MCF 10A (cell line): ENCODE measurements at regions of chr2 and their contacts with region 1.

Region 1: GRCh38 chr2:190648289-190649034 is 421 bp upstream of the NAB1 start:
- DNase-seq: peak; percentile 89
- H3K4me3 Mint-ChIP-seq: peak overlapping the region; percentile 94
- H3K27ac Mint-ChIP-seq: peak overlapping the region; percentile 85
- H3K4me1 Mint-ChIP-seq: peaks cover 25% of the 10 kb centered on the region
- H3K27me3 Mint-ChIP-seq: no peaks in the 10 kb centered on the region
- CTCF ChIP-seq: no peak

Region 2: GRCh38 chr2:190327867-190328572 is 320.4 kb before region 1 on chr2:
- CTCF ChIA-PET with region 1: no interaction called
- POLR2A ChIA-PET with region 1: no interaction called
- intact Hi-C with region 1: no loop called
- DNase-seq: no peak
- H3K4me3 Mint-ChIP-seq: no peak overlapping the region
- H3K27ac Mint-ChIP-seq: no peak overlapping the region
- H3K4me1 Mint-ChIP-seq: no peaks in the 10 kb centered on the region
- H3K27me3 Mint-ChIP-seq: no peaks in the 10 kb centered on the region
- CTCF ChIP-seq: no peak

Region 3: DNA sequence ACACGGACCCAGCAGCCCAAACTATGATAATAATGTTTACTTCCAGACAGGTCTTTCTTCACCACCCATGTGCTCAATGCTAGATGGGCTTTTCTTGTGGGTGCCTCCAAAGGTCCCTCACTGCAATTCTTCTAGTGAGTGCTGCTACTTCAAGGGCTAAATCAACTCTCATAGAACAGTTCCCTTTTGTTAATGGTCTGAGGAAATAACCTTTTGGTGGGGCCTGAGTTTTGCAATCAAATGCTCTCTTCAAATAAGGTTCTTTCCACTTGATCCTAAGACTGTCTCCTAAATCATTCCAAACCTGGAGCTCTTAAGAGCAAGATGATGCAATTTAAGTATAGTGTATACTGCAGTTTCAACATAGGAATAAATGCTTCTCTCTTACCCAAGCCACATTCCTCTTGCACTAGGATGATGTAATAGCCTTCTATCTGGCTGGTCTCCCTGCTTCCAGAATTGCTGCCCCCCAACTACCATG is 119.9 kb before region 1 on chr2:
- CTCF ChIA-PET with region 1: interaction called, 3 read pairs
- POLR2A ChIA-PET with region 1: interaction called, 42 read pairs
- intact Hi-C with region 1: no loop called
- DNase-seq: peak; percentile 89
- H3K4me3 Mint-ChIP-seq: no peak overlapping the region
- H3K27ac Mint-ChIP-seq: peak overlapping the region; percentile 87
- H3K4me1 Mint-ChIP-seq: peaks cover 36% of the 10 kb centered on the region
- H3K27me3 Mint-ChIP-seq: no peaks in the 10 kb centered on the region
- CTCF ChIP-seq: no peak

Region 4: GRCh38 chr2:190545555-190546385 is 102.7 kb before region 1 on chr2:
- CTCF ChIA-PET with region 1: interaction called, 4 read pairs
- POLR2A ChIA-PET with region 1: interaction called, 37 read pairs
- intact Hi-C with region 1: no loop called
- DNase-seq: no peak
- H3K4me3 Mint-ChIP-seq: peak overlapping the region; percentile 63
- H3K27ac Mint-ChIP-seq: peak overlapping the region; percentile 94
- H3K4me1 Mint-ChIP-seq: peaks cover 32% of the 10 kb centered on the region
- H3K27me3 Mint-ChIP-seq: no peaks in the 10 kb centered on the region
- CTCF ChIP-seq: no peak

Region 5: GRCh38 chr2:190578158-190579057 is 70.1 kb before region 1 on chr2:
- CTCF ChIA-PET with region 1: no interaction called
- POLR2A ChIA-PET with region 1: interaction called, 47 read pairs
- intact Hi-C with region 1: no loop called
- DNase-seq: peak; percentile 95
- H3K4me3 Mint-ChIP-seq: peak overlapping the region; percentile 60
- H3K27ac Mint-ChIP-seq: peak overlapping the region; percentile 81
- H3K4me1 Mint-ChIP-seq: peaks cover 53% of the 10 kb centered on the region
- H3K27me3 Mint-ChIP-seq: no peaks in the 10 kb centered on the region
- CTCF ChIP-seq: no peak

Region 6: DNA sequence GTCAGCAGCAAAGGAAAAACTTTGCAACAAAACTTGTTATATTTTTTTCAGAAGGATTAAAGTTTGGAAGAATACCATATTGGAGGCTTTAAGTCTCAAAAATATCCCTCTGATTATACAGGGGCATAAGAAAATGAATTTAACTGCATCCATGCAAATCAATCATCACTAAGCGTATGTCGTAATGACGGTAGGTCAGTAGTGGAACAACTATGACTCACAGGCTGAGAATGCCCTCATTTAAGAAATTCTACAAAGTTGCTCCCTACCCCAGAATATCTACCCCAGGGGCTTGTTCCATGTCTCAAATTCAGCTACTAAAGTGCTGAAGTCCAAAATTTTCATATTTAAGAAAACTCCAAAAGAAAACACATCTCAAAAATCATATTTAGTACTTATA is 12.1 kb before region 1 on chr2:
- CTCF ChIA-PET with region 1: interaction called, 6 read pairs
- POLR2A ChIA-PET with region 1: interaction called, 70 read pairs
- intact Hi-C with region 1: no loop called
- DNase-seq: peak; percentile 83
- H3K4me3 Mint-ChIP-seq: no peak overlapping the region
- H3K27ac Mint-ChIP-seq: peak overlapping the region; percentile 80
- H3K4me1 Mint-ChIP-seq: peaks cover 50% of the 10 kb centered on the region
- H3K27me3 Mint-ChIP-seq: no peaks in the 10 kb centered on the region
- CTCF ChIP-seq: no peak

Region 7: GRCh38 chr2:190679813-190680591 is 31.5 kb after region 1 on chr2:
- CTCF ChIA-PET with region 1: interaction called, 6 read pairs
- POLR2A ChIA-PET with region 1: interaction called, 17 read pairs
- intact Hi-C with region 1: no loop called
- DNase-seq: peak; percentile 95
- H3K4me3 Mint-ChIP-seq: peak overlapping the region; percentile 12
- H3K27ac Mint-ChIP-seq: peak overlapping the region; percentile 50
- H3K4me1 Mint-ChIP-seq: peaks cover 18% of the 10 kb centered on the region
- H3K27me3 Mint-ChIP-seq: no peaks in the 10 kb centered on the region
- CTCF ChIP-seq: peak; percentile 86

Region 8: DNA sequence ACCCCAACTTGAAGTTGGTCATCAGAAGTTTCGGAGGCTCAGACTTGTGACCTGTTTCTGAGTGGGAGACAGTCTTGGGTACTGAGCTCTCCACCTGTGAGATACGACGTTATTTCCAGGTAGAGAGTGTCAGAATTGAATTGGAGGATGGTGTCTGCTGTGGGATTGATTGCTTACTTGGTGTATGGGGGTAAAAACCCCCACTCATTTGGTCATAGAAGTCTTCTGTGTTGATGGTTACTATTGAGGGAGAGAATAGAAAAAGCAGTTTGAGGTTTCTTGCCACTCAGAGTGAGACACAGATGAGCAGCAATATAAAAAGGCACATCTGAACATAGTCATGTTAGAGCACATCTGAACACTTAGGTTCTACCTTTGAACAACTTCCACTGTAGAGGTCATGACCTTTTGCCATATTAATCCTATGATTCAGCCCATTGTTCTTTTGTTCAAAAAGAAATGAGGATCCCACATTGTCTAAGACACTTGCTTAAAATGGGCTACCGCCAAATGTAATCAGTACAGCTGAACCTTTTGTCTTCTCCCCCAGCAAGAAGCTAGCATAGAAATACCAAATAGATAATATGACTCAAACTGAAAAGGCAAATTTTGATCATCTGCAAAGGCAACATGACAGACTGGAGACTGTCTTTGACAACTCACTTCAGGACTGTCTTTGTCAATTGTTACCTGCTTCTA is 73.7 kb after region 1 on chr2:
- CTCF ChIA-PET with region 1: no interaction called
- POLR2A ChIA-PET with region 1: no interaction called
- intact Hi-C with region 1: no loop called
- DNase-seq: no peak
- H3K4me3 Mint-ChIP-seq: no peak overlapping the region
- H3K27ac Mint-ChIP-seq: no peak overlapping the region
- H3K4me1 Mint-ChIP-seq: peaks cover 11% of the 10 kb centered on the region
- H3K27me3 Mint-ChIP-seq: no peaks in the 10 kb centered on the region
- CTCF ChIP-seq: no peak

Region 9: DNA sequence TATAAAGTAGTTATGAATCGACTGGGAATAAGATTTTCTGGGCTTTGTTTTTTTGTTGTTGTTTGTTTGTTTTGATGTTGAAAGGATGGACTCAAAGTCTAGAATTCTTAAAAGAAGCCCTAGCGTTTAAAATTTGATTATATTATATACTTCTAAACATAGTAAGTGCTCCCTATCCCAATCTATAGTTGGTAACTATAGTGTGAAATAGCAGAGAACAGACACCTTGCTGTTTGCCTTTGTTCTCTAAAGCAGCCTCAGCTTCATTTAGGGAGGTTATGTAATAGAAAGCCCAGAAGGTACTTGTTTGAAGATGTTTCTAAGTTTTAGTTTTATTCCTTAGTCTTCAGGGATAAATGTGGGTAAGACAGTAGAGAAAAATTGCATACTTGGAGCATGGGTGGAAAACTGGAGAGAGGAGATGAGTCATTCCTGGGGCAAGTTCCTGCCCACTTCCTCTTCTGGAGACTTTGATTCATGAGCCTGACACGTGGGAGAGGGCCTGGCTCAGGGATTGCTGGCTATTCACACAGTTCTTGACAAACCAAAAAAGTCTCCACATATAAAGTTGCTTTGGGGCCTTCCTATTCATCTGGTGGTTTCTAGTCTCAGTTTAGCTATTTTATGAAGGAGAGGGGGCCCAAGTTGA is 728.6 kb after region 1 on chr2:
- CTCF ChIA-PET with region 1: no interaction called
- POLR2A ChIA-PET with region 1: no interaction called
- intact Hi-C with region 1: no loop called
- DNase-seq: peak; percentile 92
- H3K4me3 Mint-ChIP-seq: no peak overlapping the region
- H3K27ac Mint-ChIP-seq: peak overlapping the region; percentile 57
- H3K4me1 Mint-ChIP-seq: peaks cover 23% of the 10 kb centered on the region
- H3K27me3 Mint-ChIP-seq: no peaks in the 10 kb centered on the region
- CTCF ChIP-seq: no peak